HCT116 (cell line): ENCODE measurements at regions of chr17 and their contacts with region 1.

Region 1: DNA sequence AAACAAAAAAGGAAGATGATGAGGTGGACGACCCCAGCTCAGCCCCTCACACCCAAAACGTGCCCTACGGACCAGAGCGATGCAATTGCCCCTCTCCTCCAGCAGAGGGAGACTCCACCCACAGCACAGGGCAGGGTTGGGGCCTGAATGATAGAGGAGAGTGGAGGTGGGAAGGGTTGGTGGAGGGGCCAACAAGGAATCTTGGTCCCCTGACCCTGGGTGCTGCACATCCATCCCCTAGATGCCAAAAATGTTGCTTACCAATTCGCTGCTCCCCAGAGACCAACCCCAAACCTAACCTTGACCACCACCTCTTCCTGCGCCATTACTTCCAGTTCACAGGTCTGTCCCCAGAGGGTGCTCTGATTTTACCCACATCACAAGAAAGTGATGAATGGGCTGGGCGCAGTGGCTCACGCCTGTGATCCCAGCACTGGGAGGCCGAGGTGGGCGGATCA is 12.9 kb downstream of the P2RX5 start:
- DNase-seq: peak; percentile 53
- ATAC-seq: peak; percentile 90
- H3K4me3 ChIP-seq: no peak overlapping the region
- H3K27ac ChIP-seq: no peak overlapping the region
- H3K4me1 ChIP-seq: peaks cover 0 to 10% of the 10 kb centered on the region in 2 experiments; a peak in 3 of 4 replicates
- H3K27me3 ChIP-seq: no peaks in the 10 kb centered on the region
- CTCF ChIP-seq: peak; percentile 93 to 98 (median 97)
- POLR2A ChIP-seq: no peak
- RAD21 ChIP-seq: peak; percentile 68

Region 2: GRCh38 chr17:3668279-3669085 is 14.6 kb before region 1 on chr17 and contains the starts of genes EMC6 and TAX1BP3:
- CTCF ChIA-PET with region 1: interaction called, 11 read pairs
- POLR2A ChIA-PET with region 1: no interaction called
- RAD21 ChIA-PET with region 1: no interaction called
- intact Hi-C with region 1: no loop called
- DNase-seq: peak; percentile 93
- ATAC-seq: peak; percentile 91
- H3K4me3 ChIP-seq: peak within 1 kb of the TSS; percentile 74 to 96
- H3K27ac ChIP-seq: peak within 1 kb of the TSS; percentile 97
- H3K4me1 ChIP-seq: peaks cover 8 to 20% of the 10 kb centered on the region in 2 experiments
- H3K27me3 ChIP-seq: no peaks in the 10 kb centered on the region
- CTCF ChIP-seq: no peak
- POLR2A ChIP-seq: peak; percentile 96
- RAD21 ChIP-seq: no peak
- total RNA-seq, gene EMC6: 62.4 TPM
- total RNA-seq, gene TAX1BP3: 50.0 TPM

Region 3: GRCh38 chr17:3827124-3827773 is 144.2 kb after region 1 on chr17:
- CTCF ChIA-PET with region 1: interaction called, 7 read pairs
- POLR2A ChIA-PET with region 1: no interaction called
- RAD21 ChIA-PET with region 1: no interaction called
- intact Hi-C with region 1: loop called (anchors 2 kb)
- DNase-seq: peak; percentile 58
- ATAC-seq: peak; percentile 83
- H3K4me3 ChIP-seq: no peak overlapping the region
- H3K27ac ChIP-seq: no peak overlapping the region
- H3K4me1 ChIP-seq: no peaks in the 10 kb centered on the region
- H3K27me3 ChIP-seq: no peaks in the 10 kb centered on the region
- CTCF ChIP-seq: peak; percentile 63 to 92 (median 88)
- POLR2A ChIP-seq: no peak
- RAD21 ChIP-seq: peak; percentile 82